Caco-2 (cell line): ENCODE measurements at regions of chr9 and their contacts with region 1.

Region 1: GRCh38 chr9:37963936-37964739 is 60.2 kb upstream of the SLC25A51 start:
- DNase-seq: peak; percentile 71 to 76
- H3K4me3 ChIP-seq: no peak overlapping the region
- H3K4me3 Mint-ChIP-seq: no peak overlapping the region
- H3K27ac Mint-ChIP-seq: peak overlapping the region; percentile 90
- H3K4me1 ChIP-seq: peaks cover 59% of the 10 kb centered on the region
- H3K4me1 Mint-ChIP-seq: peaks cover 29% of the 10 kb centered on the region
- H3K27me3 ChIP-seq: no peaks in the 10 kb centered on the region
- H3K27me3 Mint-ChIP-seq: no peaks in the 10 kb centered on the region
- CTCF ChIP-seq: no peak

Region 2: GRCh38 chr9:37943329-37944265 is 20.5 kb before region 1 on chr9:
- CTCF ChIA-PET with region 1: no interaction called
- POLR2A ChIA-PET with region 1: no interaction called
- intact Hi-C with region 1: loop called (anchors 2 kb)
- DNase-seq: peak; percentile 69 to 80
- H3K4me3 ChIP-seq: no peak overlapping the region
- H3K4me3 Mint-ChIP-seq: peak overlapping the region; percentile 32
- H3K27ac Mint-ChIP-seq: peak overlapping the region; percentile 74
- H3K4me1 ChIP-seq: peaks cover 65% of the 10 kb centered on the region
- H3K4me1 Mint-ChIP-seq: peaks cover 35% of the 10 kb centered on the region
- H3K27me3 ChIP-seq: no peaks in the 10 kb centered on the region
- H3K27me3 Mint-ChIP-seq: no peaks in the 10 kb centered on the region
- CTCF ChIP-seq: no peak

Region 3: GRCh38 chr9:37951671-37952579 is 12.2 kb before region 1 on chr9:
- CTCF ChIA-PET with region 1: no interaction called
- POLR2A ChIA-PET with region 1: no interaction called
- intact Hi-C with region 1: loop called (anchors 2 kb)
- DNase-seq: no peak
- H3K4me3 ChIP-seq: no peak overlapping the region
- H3K4me3 Mint-ChIP-seq: no peak overlapping the region
- H3K27ac Mint-ChIP-seq: peak overlapping the region; percentile 32
- H3K4me1 ChIP-seq: peaks cover 24% of the 10 kb centered on the region
- H3K4me1 Mint-ChIP-seq: peaks cover 27% of the 10 kb centered on the region
- H3K27me3 ChIP-seq: no peaks in the 10 kb centered on the region
- H3K27me3 Mint-ChIP-seq: no peaks in the 10 kb centered on the region
- CTCF ChIP-seq: no peak

Region 4: DNA sequence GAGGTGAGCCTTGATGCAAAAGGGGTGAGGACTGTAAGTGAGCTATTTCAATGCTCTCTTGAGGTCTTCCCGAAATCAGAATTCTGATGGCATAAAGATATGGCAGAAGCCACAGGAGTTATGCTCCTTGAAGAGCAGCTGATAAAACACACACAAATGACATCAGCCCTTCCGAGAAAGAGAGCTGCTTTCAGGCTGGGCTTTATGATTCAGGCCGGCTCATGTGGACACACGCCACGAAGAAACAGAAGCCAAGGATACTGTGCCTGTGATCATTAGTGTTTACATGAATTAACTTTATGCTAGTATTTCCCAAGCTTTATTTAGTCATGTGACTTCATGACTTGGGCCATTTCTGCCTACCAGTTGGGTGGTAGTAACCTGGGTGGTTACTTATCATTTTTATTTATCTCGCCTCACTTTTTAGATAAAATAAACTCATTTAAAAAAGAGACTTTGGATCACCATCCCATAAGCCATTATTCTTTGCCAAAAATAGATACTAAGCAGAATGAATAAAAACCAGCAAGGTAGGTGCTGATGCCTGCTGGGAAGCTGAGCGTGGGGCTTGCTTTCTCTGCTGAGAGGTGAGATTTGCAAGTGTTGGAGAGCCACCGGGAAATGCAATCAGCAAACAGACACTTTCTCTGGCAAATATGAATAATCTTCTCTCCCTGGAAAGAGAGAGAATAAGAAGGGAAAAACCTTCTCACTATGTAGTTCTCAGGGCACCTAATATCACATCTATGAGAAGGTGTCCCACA is 12.8 kb after region 1 on chr9:
- CTCF ChIA-PET with region 1: no interaction called
- POLR2A ChIA-PET with region 1: no interaction called
- intact Hi-C with region 1: no loop called
- DNase-seq: no peak
- H3K4me3 ChIP-seq: no peak overlapping the region
- H3K4me3 Mint-ChIP-seq: no peak overlapping the region
- H3K27ac Mint-ChIP-seq: no peak overlapping the region
- H3K4me1 ChIP-seq: peaks cover 13% of the 10 kb centered on the region
- H3K4me1 Mint-ChIP-seq: peaks cover 12% of the 10 kb centered on the region
- H3K27me3 ChIP-seq: no peaks in the 10 kb centered on the region
- H3K27me3 Mint-ChIP-seq: no peaks in the 10 kb centered on the region
- CTCF ChIP-seq: no peak

Region 5: DNA sequence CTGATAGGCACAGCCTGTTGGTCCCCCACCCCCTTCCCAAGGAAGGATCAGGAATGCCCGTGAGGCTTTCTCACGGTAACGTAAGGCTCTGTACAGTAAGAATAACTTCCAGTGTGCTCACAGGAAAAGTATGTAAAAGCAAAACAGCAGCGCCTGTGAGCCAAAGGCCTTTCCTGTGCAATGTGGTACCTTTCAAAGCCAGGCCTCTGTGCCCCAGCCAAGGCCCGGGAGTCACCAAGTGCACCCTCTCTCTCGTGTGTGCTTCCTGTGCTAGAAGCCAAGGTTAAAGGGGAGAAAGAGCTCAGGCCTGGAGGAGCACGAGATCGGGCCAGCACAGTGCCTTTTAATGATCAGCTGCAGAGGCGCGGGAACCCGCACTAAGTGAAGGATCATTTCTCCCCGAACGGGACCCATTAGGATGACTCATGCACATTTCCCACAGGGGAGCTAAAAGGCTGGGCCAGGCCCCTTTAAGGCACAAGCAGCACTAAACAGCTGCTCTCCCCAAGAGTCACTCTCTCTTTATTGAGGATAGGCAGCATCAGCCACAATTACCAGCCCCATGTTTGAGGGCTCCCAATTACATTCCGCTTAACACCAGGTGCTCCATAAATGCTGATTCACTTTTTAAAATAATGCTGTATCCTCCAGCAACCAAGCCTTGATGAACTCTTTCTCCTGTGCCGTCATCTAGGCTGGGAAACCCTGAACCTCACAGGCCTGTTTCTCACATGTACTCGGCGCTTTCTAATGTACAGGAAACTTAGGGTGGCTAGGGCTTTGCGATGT is 62.1 kb after region 1 on chr9:
- CTCF ChIA-PET with region 1: interaction called, 4 read pairs
- POLR2A ChIA-PET with region 1: no interaction called
- intact Hi-C with region 1: loop called (anchors 2 kb)
- DNase-seq: no peak
- H3K4me3 ChIP-seq: no peak overlapping the region
- H3K4me3 Mint-ChIP-seq: no peak overlapping the region
- H3K27ac Mint-ChIP-seq: peak overlapping the region; percentile 94
- H3K4me1 ChIP-seq: peaks cover 51% of the 10 kb centered on the region
- H3K4me1 Mint-ChIP-seq: peaks cover 35% of the 10 kb centered on the region
- H3K27me3 ChIP-seq: no peaks in the 10 kb centered on the region
- H3K27me3 Mint-ChIP-seq: no peaks in the 10 kb centered on the region
- CTCF ChIP-seq: no peak

Region 6: DNA sequence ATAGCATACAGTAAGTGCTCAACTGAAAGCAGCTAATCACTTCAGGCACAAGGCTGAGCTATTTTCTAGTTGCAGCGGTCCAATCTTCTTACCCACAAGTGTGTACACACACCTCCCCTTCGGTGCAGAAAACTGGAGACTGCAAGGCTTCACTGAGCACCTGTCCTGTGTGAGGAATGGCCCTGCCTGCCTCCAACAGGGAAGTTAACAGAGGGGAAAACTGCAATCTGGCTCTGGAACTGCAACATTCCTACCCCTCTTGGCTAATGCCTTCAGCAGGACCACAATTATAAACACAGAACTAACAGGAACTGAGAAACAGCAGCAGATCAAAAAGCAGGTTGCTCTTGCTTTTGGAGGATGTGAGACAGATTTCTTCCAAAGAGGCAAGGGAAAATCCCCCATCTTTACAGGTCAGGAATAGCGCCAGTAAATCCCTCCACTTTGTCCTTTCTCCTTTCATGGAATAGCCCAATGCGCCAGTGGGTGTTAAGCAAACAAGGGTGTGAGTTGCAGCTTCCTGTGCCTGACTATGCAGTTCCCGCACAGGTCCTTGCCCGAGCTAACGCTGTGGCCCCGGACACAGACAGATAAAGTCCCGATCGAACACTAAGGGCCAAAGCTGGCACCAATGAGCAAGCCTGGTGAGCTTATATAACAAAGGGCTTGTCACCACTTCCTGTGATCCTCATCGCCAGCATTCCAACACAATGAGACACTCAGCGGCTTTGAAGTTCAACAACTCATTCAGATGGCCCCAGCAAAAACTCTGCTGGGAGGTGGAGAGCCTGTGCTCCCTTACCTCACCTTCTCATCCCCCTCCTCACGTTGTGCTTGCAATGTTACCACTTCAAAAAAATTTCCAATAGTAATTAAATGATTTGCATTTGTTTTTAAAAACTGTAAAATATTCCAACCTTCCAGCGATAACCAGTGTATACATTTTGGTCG is 83.4 kb after region 1 on chr9:
- CTCF ChIA-PET with region 1: no interaction called
- POLR2A ChIA-PET with region 1: interaction called, 3 read pairs
- intact Hi-C with region 1: loop called (anchors 1 kb)
- DNase-seq: peak; percentile 79 to 90
- H3K4me3 ChIP-seq: peak overlapping the region; percentile 17
- H3K4me3 Mint-ChIP-seq: peak overlapping the region; percentile 79
- H3K27ac Mint-ChIP-seq: peak overlapping the region; percentile 100
- H3K4me1 ChIP-seq: peaks cover 62% of the 10 kb centered on the region
- H3K4me1 Mint-ChIP-seq: peaks cover 51% of the 10 kb centered on the region
- H3K27me3 ChIP-seq: no peaks in the 10 kb centered on the region
- H3K27me3 Mint-ChIP-seq: no peaks in the 10 kb centered on the region
- CTCF ChIP-seq: no peak

Region 7: GRCh38 chr9:38057416-38058195 is 93.5 kb after region 1 on chr9:
- CTCF ChIA-PET with region 1: no interaction called
- POLR2A ChIA-PET with region 1: no interaction called
- intact Hi-C with region 1: no loop called
- DNase-seq: peak in 1 of 2 experiments; percentile 17
- H3K4me3 ChIP-seq: no peak overlapping the region
- H3K4me3 Mint-ChIP-seq: no peak overlapping the region
- H3K27ac Mint-ChIP-seq: peak overlapping the region; percentile 64
- H3K4me1 ChIP-seq: peaks cover 25% of the 10 kb centered on the region; the same call in 1 of the 2 replicates
- H3K4me1 Mint-ChIP-seq: peaks cover 37% of the 10 kb centered on the region
- H3K27me3 ChIP-seq: no peaks in the 10 kb centered on the region
- H3K27me3 Mint-ChIP-seq: no peaks in the 10 kb centered on the region
- CTCF ChIP-seq: no peak

Region 8: DNA sequence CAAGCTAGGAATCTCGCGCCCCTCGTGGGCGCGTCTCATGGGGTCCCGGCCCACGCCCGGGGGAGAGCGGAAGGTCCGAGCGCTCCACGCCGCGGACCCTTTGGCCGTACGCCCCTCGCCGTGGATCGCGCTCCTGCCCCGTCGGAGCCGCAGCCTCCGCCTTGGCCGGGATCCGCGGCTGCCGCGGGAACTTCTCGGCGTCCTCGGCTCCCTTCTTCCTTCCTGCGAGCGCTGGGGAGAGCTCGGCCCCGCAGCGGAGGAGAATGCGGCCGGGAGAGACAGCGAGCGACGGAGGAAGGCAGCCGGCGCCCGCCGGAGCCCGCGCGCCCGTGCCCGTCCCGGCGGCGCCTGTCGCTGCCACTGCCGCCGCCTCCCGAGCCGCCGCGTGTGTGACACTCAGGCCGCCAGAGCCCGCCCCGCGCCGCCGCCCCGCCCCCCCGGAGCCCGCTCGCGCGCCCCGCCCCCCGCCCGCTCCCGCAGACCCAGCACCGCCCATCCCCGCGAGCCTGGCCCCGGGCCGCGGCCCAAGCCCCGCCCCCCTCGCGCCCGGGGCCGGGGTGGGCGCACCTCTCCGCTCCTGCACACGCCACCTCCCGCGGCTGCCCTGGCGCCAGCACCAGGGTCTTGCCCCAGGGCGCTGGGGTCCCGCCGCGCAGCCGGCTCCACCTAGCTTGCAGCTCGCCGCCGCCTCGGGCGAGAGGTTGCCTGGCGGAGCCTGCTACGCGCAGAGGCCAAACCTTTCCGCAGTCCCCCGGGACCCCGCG is 104.9 kb after region 1 on chr9 and contains the start of gene SHB:
- CTCF ChIA-PET with region 1: no interaction called
- POLR2A ChIA-PET with region 1: no interaction called
- intact Hi-C with region 1: loop called (anchors 1 kb)
- DNase-seq: peak; percentile 81 to 84
- H3K4me3 ChIP-seq: peak within 1 kb of the TSS; percentile 92
- H3K4me3 Mint-ChIP-seq: peak within 1 kb of the TSS; percentile 95
- H3K27ac Mint-ChIP-seq: peak within 1 kb of the TSS; percentile 83
- H3K4me1 ChIP-seq: peaks cover 32% of the 10 kb centered on the region
- H3K4me1 Mint-ChIP-seq: peaks cover 24% of the 10 kb centered on the region
- H3K27me3 ChIP-seq: no peaks in the 10 kb centered on the region
- H3K27me3 Mint-ChIP-seq: no peaks in the 10 kb centered on the region
- CTCF ChIP-seq: no peak
- total RNA-seq, gene SHB: 18.3 and 18.4 TPM in 2 replicates